ENCODE measurements at regions of chr15 and their contacts with region 1.

Region 1: GRCh38 chr15:55168329-55168974 is 28.3 kb downstream of the RSL24D1 start:
- DNase-seq: peak; percentile 70
- H3K4me3 Mint-ChIP-seq: no peak overlapping the region
- H3K27ac Mint-ChIP-seq: no peak overlapping the region
- H3K4me1 Mint-ChIP-seq: no peaks in the 10 kb centered on the region
- H3K27me3 Mint-ChIP-seq: no peaks in the 10 kb centered on the region

Region 2: DNA sequence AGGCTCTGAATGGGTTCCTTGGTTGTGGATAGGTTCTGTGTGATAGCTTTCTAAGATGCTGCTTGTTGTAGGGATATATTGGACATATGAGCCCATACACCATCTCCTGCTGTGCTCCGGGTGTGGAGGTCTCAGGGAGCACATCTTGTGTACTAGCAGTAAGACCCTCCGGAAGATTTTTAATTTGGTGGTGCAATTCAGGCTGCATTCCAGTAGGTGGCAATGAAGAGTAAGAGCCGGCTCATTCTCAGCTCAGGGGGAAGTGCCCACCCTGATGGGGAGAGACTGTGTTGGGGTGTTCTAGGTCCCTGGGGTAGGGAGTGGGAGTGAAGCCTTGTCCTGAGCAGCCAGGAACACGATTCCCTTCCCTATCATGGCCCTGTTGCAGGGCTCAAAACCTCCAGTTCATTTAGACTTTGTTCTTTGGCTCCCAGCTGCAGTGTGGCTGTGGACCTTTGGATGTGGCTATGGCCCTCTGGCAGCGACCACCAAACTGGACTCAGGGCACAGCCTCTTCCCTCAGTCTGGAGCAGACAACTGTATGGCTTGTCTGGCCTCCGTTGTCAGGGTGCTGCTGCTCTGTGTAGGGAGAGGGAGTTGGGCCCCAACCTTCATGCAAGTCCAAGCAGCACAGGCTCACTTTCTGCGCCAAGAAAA is 1085.5 kb before region 1 on chr15:
- CTCF ChIA-PET with region 1: no interaction called
- POLR2A ChIA-PET with region 1: no interaction called
- intact Hi-C with region 1: loop called (anchors 5 kb)
- DNase-seq: peak; percentile 12
- H3K4me3 Mint-ChIP-seq: no peak overlapping the region
- H3K27ac Mint-ChIP-seq: no peak overlapping the region
- H3K4me1 Mint-ChIP-seq: no peaks in the 10 kb centered on the region
- H3K27me3 Mint-ChIP-seq: peaks cover 2% of the 10 kb centered on the region

Region 3: DNA sequence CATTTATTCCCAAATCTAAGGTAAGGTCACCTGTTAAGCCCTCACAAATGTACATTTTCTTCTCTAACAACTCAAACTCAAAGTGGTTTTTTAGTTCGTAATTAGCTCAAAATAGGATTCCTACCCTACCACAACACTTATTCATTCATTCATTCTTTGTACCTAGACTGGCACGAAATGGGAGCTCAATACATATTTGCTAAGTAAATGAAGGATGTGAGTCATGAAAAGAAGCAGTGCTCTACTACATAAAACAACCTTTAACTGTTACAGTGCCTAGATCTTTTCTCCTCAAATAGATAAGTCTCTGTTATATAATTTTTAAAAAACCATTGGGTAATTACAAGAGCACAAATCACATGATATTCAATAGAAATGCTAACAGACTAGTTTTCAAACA is 15.2 kb after region 1 on chr15:
- CTCF ChIA-PET with region 1: interaction called, 24 read pairs
- POLR2A ChIA-PET with region 1: no interaction called
- intact Hi-C with region 1: no loop called
- DNase-seq: no peak
- H3K4me3 Mint-ChIP-seq: no peak overlapping the region
- H3K27ac Mint-ChIP-seq: no peak overlapping the region
- H3K4me1 Mint-ChIP-seq: peaks cover 25% of the 10 kb centered on the region
- H3K27me3 Mint-ChIP-seq: no peaks in the 10 kb centered on the region